ENCODE measurements at regions of chr1 and their contacts with region 1.

Region 1: DNA sequence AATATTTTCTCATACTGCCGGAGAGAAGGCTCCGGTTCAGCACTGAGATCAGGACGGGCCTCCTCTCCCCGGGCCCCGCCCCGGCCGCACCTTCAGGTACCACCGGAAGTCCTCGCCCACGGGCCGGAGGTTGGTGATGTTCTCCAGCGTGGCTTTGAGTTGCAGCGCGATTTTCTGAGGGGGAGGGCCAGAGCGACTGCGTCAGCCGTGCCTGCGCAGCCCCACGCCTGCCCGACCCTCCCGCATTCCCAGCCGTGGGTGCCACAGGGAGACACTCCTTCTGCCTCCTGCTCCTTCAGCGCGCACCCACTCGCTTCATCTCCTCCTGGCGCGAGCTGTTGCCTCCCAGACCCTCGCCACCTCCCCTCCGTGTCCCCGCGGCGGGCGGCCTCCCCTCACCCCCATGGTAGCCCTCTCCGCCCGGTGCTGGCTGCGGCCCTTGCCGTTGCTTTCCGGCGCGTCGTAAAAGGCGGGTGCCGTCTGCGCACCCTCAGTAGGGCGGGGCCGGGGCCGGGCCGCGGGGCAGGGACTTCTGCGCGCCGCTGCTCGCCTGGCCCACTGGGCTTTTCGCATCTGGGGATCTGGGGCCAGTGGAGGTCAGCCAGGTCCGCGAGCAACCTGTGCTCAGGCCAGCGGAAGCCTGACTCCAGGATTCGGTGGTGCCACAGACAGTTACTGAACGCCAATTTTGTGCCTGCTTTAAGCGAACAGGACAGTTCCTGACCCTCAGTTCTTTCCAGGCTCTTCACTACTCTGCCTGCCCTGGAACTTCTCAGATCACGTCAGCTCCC is at the start of gene CZIB:
- DNase-seq: peak; percentile 96
- ATAC-seq: peak; percentile 96
- H3K4me3 Mint-ChIP-seq: peak within 1 kb of the TSS; percentile 90
- H3K27ac Mint-ChIP-seq: peak within 1 kb of the TSS; percentile 97
- H3K4me1 Mint-ChIP-seq: peaks cover 31% of the 10 kb centered on the region
- H3K27me3 Mint-ChIP-seq: no peaks in the 10 kb centered on the region
- total RNA-seq, gene CZIB: 44.3 to 45.5 TPM

Region 2: GRCh38 chr1:53238197-53239155 is 18.1 kb after region 1 on chr1 and contains the start of gene MAGOH:
- CTCF ChIA-PET with region 1: interaction called, 11 read pairs
- POLR2A ChIA-PET with region 1: interaction called, 3 read pairs
- DNase-seq: peak; percentile 97
- ATAC-seq: peak; percentile 99
- H3K4me3 Mint-ChIP-seq: peak within 1 kb of the TSS; percentile 94
- H3K27ac Mint-ChIP-seq: peak within 1 kb of the TSS; percentile 95
- H3K4me1 Mint-ChIP-seq: peaks cover 31% of the 10 kb centered on the region
- H3K27me3 Mint-ChIP-seq: no peaks in the 10 kb centered on the region
- total RNA-seq, gene MAGOH: 83.1 to 85.2 TPM

Region 3: GRCh38 chr1:53294567-53294966 is 74.2 kb after region 1 on chr1:
- CTCF ChIA-PET with region 1: no interaction called
- POLR2A ChIA-PET with region 1: no interaction called
- DNase-seq: peak; percentile 27
- ATAC-seq: no peak
- H3K4me3 Mint-ChIP-seq: no peak overlapping the region
- H3K27ac Mint-ChIP-seq: peak overlapping the region; percentile 78
- H3K4me1 Mint-ChIP-seq: peaks cover 63% of the 10 kb centered on the region
- H3K27me3 Mint-ChIP-seq: no peaks in the 10 kb centered on the region

Measured in activated CD8-positive, alpha-beta T cell treated with anti-CD3 and anti-CD28 coated beads, Interleukin-2, amount 10 ng/mL, durations not matched to agents 7 days and 5 days (primary cell).